Calu3 (cell line): ENCODE measurements at regions of chr5 and their contacts with region 1.

Region 1: DNA sequence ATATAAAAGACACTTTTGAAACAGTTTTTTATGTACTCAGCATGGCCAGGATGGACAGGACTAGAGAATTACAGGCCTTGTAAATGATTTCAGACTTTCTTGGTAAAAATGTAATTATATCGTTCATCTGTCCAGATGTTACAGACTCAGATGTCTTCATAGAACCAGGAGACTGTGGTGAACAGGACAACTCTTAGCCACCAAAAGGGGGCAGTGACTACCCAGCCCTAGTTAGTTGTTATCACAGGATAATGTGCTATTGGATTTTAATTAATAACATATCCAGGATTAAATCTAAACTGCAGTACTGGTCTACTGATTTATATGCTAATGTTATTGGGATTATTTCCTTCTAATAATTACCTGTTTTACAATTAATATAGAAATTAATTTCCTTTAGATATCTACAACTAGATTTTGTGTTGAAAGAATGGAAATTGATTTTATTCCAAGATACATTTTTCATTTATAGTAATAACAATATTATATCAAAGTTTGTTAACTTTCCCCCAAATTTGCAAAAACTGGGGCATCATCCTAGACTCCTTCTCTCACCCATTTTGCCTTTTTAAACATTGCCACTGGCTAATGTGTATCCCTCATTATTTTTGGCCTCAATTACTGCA is 99.4 kb downstream of the MTREX start:
- DNase-seq: peak; percentile 22
- H3K4me3 Mint-ChIP-seq: no peak overlapping the region
- H3K27ac Mint-ChIP-seq: no peak overlapping the region
- H3K4me1 Mint-ChIP-seq: peaks cover 15% of the 10 kb centered on the region
- H3K27me3 Mint-ChIP-seq: no peaks in the 10 kb centered on the region
- CTCF ChIP-seq: peak; percentile 22

Region 2: GRCh38 chr5:55456216-55456895 is 49.2 kb after region 1 on chr5:
- CTCF ChIA-PET with region 1: no interaction called
- intact Hi-C with region 1: no loop called
- DNase-seq: no peak
- H3K4me3 Mint-ChIP-seq: no peak overlapping the region
- H3K27ac Mint-ChIP-seq: no peak overlapping the region
- H3K4me1 Mint-ChIP-seq: peaks cover 7% of the 10 kb centered on the region
- H3K27me3 Mint-ChIP-seq: no peaks in the 10 kb centered on the region
- CTCF ChIP-seq: no peak

Region 3: DNA sequence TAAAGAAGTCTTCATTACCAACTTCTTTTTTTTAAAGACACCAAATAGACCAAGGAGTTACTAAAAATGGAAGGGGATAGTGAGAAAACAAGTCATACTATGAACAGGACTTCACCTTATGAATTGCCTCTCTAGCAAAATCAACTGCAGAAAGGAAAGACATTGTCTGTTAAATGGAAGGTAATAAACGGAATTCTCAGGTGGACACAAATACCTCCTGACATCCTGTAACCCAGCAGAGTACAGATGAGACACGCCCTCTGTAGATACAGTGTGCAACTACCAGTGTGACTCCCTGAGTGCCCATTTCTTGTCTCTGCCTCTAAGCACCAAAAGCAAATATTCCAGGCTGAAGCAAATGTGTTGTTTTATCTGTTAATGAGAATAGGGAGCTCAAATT is 139.8 kb after region 1 on chr5:
- CTCF ChIA-PET with region 1: no interaction called
- intact Hi-C with region 1: loop called (anchors 5 kb)
- DNase-seq: peak; percentile 19
- H3K4me3 Mint-ChIP-seq: no peak overlapping the region
- H3K27ac Mint-ChIP-seq: no peak overlapping the region
- H3K4me1 Mint-ChIP-seq: no peaks in the 10 kb centered on the region
- H3K27me3 Mint-ChIP-seq: no peaks in the 10 kb centered on the region
- CTCF ChIP-seq: no peak